ENCODE measurements at regions of chr7 and their contacts with region 1.

Region 1: GRCh38 chr7:106285051-106285854 is 470 bp upstream of the NAMPT start:
- DNase-seq: peak; percentile 95
- ATAC-seq: peak; percentile 91
- H3K4me3 ChIP-seq: peak overlapping the region; percentile 83 to 90 (median 88)
- H3K27ac ChIP-seq: peak overlapping the region; percentile 85
- H3K4me1 ChIP-seq: peaks cover 44% of the 10 kb centered on the region
- H3K27me3 ChIP-seq: peaks cover 0 to under 1% of the 10 kb centered on the region in 2 experiments; a peak in 1 of 5 replicates
- CTCF ChIP-seq: no peak
- EP300 ChIP-seq: peak in 1 of 2 experiments; percentile 41; a peak in 1 of 4 replicates
- POLR2A ChIP-seq: peak; percentile 55 to 87
- RAD21 ChIP-seq: no peak

Region 2: GRCh38 chr7:105638902-105639495 is 646.3 kb before region 1 on chr7:
- CTCF ChIA-PET with region 1: no interaction called
- POLR2A ChIA-PET with region 1: no interaction called
- in situ Hi-C with region 1: no loop called
- intact Hi-C with region 1: no loop called
- DNase-seq: no peak
- ATAC-seq: no peak
- H3K4me3 ChIP-seq: no peak overlapping the region
- H3K27ac ChIP-seq: no peak overlapping the region
- H3K4me1 ChIP-seq: no peaks in the 10 kb centered on the region
- H3K27me3 ChIP-seq: no peaks in the 10 kb centered on the region
- CTCF ChIP-seq: no peak
- EP300 ChIP-seq: no peak
- POLR2A ChIP-seq: no peak
- RAD21 ChIP-seq: no peak

Region 3: DNA sequence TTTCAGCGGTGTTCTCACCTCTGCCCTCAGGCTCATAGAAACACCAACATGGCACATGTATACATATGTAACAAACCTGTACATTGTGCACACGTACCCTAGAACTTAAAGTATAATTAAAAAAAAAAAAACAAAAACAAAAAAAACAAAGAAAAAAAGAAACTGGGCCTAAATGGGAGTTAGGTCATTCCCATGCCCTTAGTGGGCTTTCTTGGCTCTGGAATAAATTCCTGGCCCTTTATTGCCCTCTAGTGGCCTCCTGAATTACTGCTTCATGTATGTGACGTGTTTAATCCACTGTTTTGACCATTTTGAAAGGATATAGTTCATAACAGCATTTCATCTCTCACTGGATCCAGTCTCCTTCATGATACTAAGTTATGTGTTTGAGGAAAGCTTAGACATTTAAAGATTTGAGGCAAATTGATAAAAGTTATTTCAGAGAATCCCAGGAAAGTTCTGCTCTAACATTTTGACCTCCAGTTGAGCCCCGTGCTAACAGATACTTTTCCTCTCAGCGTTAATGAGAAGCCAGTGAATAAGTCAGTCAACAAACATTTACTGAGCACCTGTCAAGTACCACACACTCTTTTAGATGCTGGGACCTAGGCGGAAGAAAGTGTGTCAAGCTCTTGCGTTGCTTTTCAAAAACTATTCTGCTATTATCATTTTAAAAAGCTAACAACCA is 118.5 kb before region 1 on chr7:
- CTCF ChIA-PET with region 1: no interaction called
- POLR2A ChIA-PET with region 1: no interaction called
- in situ Hi-C with region 1: no loop called
- intact Hi-C with region 1: no loop called
- DNase-seq: peak; percentile 62
- ATAC-seq: peak; percentile 68
- H3K4me3 ChIP-seq: no peak overlapping the region
- H3K27ac ChIP-seq: no peak overlapping the region
- H3K4me1 ChIP-seq: no peaks in the 10 kb centered on the region
- H3K27me3 ChIP-seq: peaks cover 0 to 26% of the 10 kb centered on the region in 2 experiments; a peak in 1 of 5 replicates
- CTCF ChIP-seq: peak; percentile 67
- EP300 ChIP-seq: no peak
- POLR2A ChIP-seq: no peak
- RAD21 ChIP-seq: peak; percentile 28; the same call in 1 of the 2 replicates

Region 4: GRCh38 chr7:106326594-106327537 is 41.6 kb after region 1 on chr7:
- CTCF ChIA-PET with region 1: no interaction called
- POLR2A ChIA-PET with region 1: interaction called, 8 read pairs
- in situ Hi-C with region 1: no loop called
- intact Hi-C with region 1: loop called (anchors 2 kb)
- DNase-seq: peak; percentile 56
- ATAC-seq: peak; percentile 76
- H3K4me3 ChIP-seq: peak overlapping the region; percentile 26 to 63 (median 56)
- H3K27ac ChIP-seq: peak overlapping the region; percentile 81
- H3K4me1 ChIP-seq: peaks cover 32% of the 10 kb centered on the region
- H3K27me3 ChIP-seq: no peaks in the 10 kb centered on the region; a peak in 1 of 5 replicates
- CTCF ChIP-seq: no peak
- EP300 ChIP-seq: no peak
- POLR2A ChIP-seq: no peak
- RAD21 ChIP-seq: no peak